ENCODE measurements at regions of chr1 and their contacts with region 1.

Region 1: DNA sequence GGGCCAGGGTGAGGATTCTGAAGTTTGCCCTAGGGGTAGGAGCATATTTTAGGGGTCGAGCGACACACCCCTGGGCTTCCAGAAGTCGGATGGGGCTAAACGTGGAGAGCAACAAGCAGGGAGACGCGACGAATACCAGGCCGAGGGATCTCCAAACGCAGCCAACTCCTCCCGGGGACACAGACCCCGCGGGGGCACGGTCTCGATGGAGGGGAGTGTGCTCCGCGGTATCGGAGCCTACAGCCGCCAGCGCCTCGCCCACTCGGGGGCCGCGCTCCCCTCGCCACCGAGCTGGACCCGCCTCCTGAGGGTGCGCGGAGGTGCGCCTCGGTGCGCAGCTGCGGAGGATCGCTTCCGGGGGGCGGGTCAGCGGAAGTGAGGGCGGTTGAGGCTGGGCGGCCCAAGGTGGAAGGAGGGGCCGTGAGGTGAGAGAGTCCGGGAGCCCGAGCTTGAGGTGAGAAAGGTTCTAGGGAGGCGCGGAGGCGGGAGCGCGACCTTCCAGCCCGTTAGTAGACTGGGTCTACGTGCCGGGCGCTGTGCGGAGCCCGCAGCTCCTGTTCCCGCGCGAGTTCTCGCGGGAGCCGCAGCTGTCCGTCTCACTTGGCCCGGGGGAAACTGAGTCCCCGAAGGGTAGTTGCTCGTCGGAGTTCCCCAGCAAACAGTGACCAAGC is at the start of gene MTFR1L:
- DNase-seq: peak; percentile 94
- H3K4me3 Mint-ChIP-seq: peak within 1 kb of the TSS; percentile 86
- H3K27ac Mint-ChIP-seq: peak within 1 kb of the TSS; percentile 88
- H3K4me1 Mint-ChIP-seq: peaks cover 36% of the 10 kb centered on the region
- H3K27me3 Mint-ChIP-seq: no peaks in the 10 kb centered on the region
- total RNA-seq, gene MTFR1L: 22.2 to 23.5 TPM

Region 2: GRCh38 chr1:25239681-25240541 is 579.8 kb before region 1 on chr1:
- CTCF ChIA-PET with region 1: no interaction called
- intact Hi-C with region 1: loop called (anchors 10 kb)
- DNase-seq: peak; percentile 96
- H3K4me3 Mint-ChIP-seq: peak overlapping the region; percentile 91
- H3K27ac Mint-ChIP-seq: peak overlapping the region; percentile 99
- H3K4me1 Mint-ChIP-seq: peaks cover 48% of the 10 kb centered on the region
- H3K27me3 Mint-ChIP-seq: no peaks in the 10 kb centered on the region

Region 3: DNA sequence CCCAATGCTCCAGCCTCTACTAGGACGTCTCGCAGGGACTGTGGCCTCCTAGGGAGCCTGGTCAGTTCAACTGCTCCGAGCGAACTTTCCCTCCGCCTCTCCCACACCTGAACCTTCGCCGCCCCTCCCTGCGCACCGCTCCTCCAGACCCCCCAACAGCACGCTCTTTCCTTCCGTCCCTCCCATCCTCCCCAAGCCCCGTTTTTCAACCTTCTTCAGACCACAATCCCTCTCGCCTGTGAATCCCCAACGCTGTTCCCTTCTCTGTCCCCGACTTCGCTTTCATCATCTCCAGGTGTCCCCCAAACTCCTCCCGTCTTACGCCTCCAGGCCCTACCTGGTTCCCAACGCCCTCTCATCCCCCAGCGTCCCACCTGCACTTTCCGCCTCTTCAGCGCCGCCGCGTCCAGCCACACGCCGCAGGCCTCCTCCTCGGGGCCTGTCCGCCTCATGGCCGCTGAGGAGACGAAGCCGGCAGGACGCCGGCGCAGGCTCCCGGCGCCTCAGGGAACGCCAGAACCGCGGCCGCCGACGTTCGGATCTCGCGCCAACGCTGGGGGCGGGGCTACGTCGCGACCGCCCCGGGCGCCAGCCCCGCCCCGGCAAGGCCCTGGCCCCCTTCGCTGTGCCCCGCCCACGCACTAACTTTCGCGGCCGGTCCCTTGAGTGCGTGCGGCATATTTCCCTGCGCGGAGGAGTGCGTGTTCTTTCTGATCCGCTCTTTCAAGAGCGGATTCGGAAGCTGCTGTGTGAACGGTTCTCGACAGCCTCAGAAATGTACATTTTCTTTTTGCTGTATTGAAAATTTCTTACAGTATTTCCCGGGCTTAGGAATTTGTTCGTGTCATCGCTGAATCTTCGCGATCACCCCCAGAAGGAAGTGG is 39.4 kb after region 1 on chr1 and contains the start of gene AUNIP:
- CTCF ChIA-PET with region 1: interaction called, 3 read pairs
- intact Hi-C with region 1: loop called (anchors 1 kb)
- DNase-seq: peak; percentile 92
- H3K4me3 Mint-ChIP-seq: peak within 1 kb of the TSS; percentile 92
- H3K27ac Mint-ChIP-seq: peak within 1 kb of the TSS; percentile 87
- H3K4me1 Mint-ChIP-seq: peaks cover 15% of the 10 kb centered on the region
- H3K27me3 Mint-ChIP-seq: no peaks in the 10 kb centered on the region
- total RNA-seq, gene AUNIP: 8.4 to 9.1 TPM

Region 4: DNA sequence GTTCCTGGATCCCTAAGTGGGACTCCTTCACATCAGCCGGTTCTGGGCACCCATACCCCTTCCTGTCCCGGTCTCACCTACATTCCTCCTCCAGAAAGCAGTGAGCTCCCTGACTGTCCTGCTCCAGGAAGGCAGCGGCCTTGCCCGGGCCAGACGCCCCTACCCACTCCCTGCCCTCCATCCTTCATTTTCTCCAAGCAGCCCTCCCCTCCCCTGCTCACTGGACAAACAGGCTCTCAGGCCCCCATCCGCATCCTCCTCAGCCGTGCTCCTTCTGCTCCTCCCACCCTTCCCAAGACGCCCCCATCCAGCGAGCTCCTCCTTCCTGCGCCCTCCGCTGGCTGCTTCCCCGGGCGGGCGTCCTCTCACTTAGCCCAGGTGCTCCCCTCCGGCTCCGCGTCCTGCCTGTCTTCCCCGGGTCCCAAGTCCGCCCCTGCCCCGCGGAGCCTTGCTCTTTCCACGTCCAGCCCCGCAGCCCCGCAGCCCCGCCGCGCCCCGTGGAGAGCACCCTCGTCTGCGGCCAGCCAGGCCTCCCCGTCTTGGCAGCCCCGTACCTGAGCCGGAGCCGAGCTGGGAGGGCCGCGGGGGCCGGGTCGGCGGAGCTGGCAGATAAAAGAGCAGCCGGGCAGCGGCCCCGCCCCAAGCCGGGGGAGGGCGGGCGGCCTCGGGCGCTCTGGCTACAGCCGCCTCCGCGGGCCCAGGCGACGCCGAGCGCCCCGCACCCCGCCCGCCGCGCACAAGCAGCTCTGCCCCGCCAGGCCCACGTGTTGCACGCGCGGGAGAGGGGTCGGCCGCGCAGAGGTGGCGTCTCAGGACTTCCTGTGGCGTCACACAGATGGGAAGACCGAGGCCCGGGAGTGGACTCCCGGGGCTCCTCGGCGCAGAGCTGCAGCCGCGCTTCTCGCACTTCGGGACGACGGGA is 55.5 kb after region 1 on chr1 and contains the start of gene PAQR7:
- CTCF ChIA-PET with region 1: no interaction called
- intact Hi-C with region 1: loop called (anchors 1 kb)
- DNase-seq: peak; percentile 58
- H3K4me3 Mint-ChIP-seq: peak within 1 kb of the TSS; percentile 84
- H3K27ac Mint-ChIP-seq: peak within 1 kb of the TSS; percentile 18
- H3K4me1 Mint-ChIP-seq: peaks cover 8% of the 10 kb centered on the region
- H3K27me3 Mint-ChIP-seq: no peaks in the 10 kb centered on the region
- total RNA-seq, gene PAQR7: 2.8 to 3.1 TPM

Region 5: DNA sequence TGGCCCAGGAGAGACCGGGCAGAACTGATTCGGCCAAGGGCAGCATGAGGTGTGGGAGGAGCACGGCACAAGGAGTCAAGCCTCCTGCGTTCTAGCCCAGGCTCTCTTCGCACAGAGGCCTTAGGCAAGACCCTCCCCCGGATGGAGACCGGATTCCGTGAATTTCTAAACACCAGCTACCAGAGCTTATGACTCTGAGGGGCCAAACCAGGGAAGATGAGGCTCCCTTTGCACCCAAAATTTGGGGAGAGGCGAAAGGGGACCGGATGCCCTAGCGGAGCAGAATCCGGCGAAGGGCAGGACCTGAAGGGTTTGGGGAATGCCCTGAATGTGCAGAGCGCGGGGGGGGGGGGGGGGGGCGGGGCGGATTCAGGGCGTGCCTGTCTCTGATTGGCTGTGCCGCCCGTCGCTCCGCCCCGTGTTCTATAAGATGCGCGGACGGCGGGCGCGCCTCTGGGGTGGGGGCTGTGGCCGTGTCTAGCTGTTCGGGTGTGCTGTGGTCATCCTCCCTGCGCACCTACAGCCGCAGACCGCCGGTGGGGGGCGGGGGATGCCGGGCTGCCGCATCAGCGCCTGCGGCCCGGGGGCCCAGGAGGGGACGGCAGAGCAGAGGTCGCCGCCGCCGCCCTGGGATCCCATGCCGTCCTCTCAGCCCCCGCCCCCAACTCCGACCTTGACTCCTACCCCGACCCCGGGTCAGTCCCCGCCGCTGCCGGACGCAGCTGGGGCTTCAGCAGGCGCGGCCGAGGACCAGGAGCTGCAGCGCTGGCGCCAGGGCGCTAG is 1173.7 kb after region 1 on chr1 and contains the start of gene TRNP1:
- CTCF ChIA-PET with region 1: no interaction called
- intact Hi-C with region 1: no loop called
- DNase-seq: peak; percentile 76
- H3K4me3 Mint-ChIP-seq: peak within 1 kb of the TSS; percentile 77
- H3K27ac Mint-ChIP-seq: no peak within 1 kb of the TSS
- H3K4me1 Mint-ChIP-seq: peaks cover 22% of the 10 kb centered on the region
- H3K27me3 Mint-ChIP-seq: peaks cover 49% of the 10 kb centered on the region
- total RNA-seq, gene TRNP1: 0.20 to 0.43 TPM

Measured in activated naive CD4-positive, alpha-beta T cell treated with anti-CD3 and anti-CD28 coated beads for 36 hours (primary cell).